Activated CD4-positive, alpha-beta T cell treated with anti-CD3 and anti-CD28 coated beads for 36 hours (primary cell): ENCODE measurements at regions of chr19 and their contacts with region 1.

Region 1: DNA sequence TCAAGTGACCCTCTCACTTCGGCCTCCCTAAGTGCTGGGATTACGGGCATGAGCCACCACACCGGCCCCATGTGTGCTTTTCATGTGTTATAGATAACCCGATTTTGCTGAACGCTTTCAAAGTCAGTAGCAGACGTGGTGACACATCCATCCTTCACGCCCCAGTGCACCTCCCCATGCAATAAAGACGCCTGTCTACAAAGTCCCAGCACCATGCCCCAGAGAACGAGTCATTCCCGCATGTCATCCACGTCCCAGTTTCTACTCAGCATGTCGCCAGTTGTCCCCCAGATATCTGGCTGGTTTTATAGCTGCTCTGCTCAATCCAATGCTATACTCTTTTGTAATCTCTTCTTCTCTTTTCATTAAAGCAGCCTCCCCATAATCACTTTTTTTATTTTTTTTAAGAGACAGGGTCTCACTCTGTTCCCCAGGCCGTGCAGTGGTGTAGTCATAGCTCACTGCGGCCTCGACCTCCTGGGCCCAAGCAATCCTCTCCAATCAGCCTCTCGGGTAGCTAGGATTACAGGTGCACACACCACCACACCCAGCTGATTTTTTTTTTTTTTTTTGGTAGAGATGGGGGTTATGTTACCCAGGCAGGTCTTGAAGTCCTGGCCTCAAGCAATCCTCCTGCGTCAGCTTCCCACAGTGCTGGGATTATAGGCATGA is 42.5 kb downstream of the DNM2 start:
- DNase-seq: peak; percentile 72
- ATAC-seq: peak; percentile 56
- H3K4me3 Mint-ChIP-seq: peak overlapping the region; percentile 70
- H3K27ac Mint-ChIP-seq: peak overlapping the region; percentile 84
- H3K4me1 Mint-ChIP-seq: peaks cover 83% of the 10 kb centered on the region
- H3K27me3 Mint-ChIP-seq: no peaks in the 10 kb centered on the region

Region 2: DNA sequence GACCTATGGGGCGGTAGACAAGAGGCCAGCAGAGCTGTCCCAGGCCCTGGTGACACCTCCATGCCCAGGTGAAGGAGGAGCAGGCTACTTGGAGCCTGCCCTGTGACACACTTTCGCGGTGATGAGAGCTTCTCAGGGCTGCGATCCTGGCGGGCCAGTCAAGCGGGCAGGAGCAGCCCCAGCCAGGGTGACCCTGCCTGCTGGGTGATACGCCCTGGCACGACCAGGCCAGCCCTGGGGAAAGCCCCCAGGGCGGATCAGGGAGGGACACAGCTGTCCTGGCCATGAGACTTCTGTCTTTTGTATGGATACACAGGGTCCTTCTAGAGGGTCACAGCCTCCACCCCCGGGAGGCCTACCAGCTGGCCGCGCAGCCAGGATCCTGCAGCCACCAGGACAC is 29.5 kb before region 1 on chr19:
- CTCF ChIA-PET with region 1: interaction called, 3 read pairs
- POLR2A ChIA-PET with region 1: interaction called, 5 read pairs
- intact Hi-C with region 1: loop called (anchors 1 kb)
- DNase-seq: no peak
- ATAC-seq: no peak
- H3K4me3 Mint-ChIP-seq: no peak overlapping the region
- H3K27ac Mint-ChIP-seq: peak overlapping the region; percentile 87
- H3K4me1 Mint-ChIP-seq: peaks cover 53% of the 10 kb centered on the region
- H3K27me3 Mint-ChIP-seq: no peaks in the 10 kb centered on the region

Region 3: DNA sequence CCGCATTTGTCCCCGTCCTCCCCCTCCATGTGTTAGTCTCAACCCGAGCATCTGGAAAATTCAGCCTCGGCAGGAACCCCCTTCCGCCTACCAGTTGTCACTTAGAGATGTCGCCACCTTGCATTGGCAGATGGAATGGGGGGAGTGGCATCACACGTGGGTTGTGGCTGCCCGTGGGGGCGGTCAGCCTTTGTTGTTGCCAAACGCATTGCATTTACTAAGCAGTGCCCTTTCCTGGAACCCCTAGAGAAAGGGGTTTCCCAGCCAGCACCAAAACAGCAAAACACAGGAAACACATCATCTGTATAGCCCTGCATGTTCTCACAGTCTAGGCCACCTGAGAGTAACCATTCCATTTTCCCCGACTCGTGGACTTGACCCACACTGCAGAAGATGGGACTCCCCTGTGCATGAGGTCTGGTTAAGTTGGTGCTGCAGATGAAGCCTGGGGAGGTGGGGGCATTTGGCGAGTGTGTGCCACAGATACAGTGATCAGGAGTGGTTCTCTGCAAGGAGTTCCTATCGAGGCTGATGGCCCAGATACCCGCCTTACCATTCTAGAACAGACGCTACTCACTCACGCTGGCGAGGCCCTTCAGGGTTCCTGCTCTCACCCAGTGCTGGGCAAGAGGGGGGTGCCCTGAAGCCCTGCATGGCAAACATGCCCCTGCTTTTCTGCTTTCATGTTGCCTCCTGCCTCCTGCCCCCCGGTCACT is 37.3 kb after region 1 on chr19:
- CTCF ChIA-PET with region 1: no interaction called
- POLR2A ChIA-PET with region 1: no interaction called
- intact Hi-C with region 1: loop called (anchors 1 to 2 kb)
- DNase-seq: peak; percentile 95
- ATAC-seq: peak; percentile 94
- H3K4me3 Mint-ChIP-seq: peak overlapping the region; percentile 68
- H3K27ac Mint-ChIP-seq: peak overlapping the region; percentile 97
- H3K4me1 Mint-ChIP-seq: peaks cover 36% of the 10 kb centered on the region
- H3K27me3 Mint-ChIP-seq: no peaks in the 10 kb centered on the region

Region 4: GRCh38 chr19:10864538-10864899 is 104.1 kb after region 1 on chr19:
- CTCF ChIA-PET with region 1: interaction called, 10 read pairs
- POLR2A ChIA-PET with region 1: interaction called, 3 read pairs
- intact Hi-C with region 1: no loop called
- DNase-seq: peak; percentile 93
- ATAC-seq: peak; percentile 94
- H3K4me3 Mint-ChIP-seq: no peak overlapping the region
- H3K27ac Mint-ChIP-seq: peak overlapping the region; percentile 16
- H3K4me1 Mint-ChIP-seq: peaks cover 14% of the 10 kb centered on the region
- H3K27me3 Mint-ChIP-seq: no peaks in the 10 kb centered on the region

Region 5: GRCh38 chr19:12400633-12401502 is 1640.5 kb after region 1 on chr19 and contains the start of gene ZNF799:
- CTCF ChIA-PET with region 1: no interaction called
- POLR2A ChIA-PET with region 1: no interaction called
- intact Hi-C with region 1: no loop called
- DNase-seq: peak; percentile 94
- ATAC-seq: peak; percentile 96
- H3K4me3 Mint-ChIP-seq: peak within 1 kb of the TSS; percentile 86
- H3K27ac Mint-ChIP-seq: peak within 1 kb of the TSS; percentile 77
- H3K4me1 Mint-ChIP-seq: peaks cover 13% of the 10 kb centered on the region
- H3K27me3 Mint-ChIP-seq: no peaks in the 10 kb centered on the region
- total RNA-seq, gene ZNF799: 4.0 to 4.3 TPM